Activated naive CD4-positive, alpha-beta T cell treated with anti-CD3 and anti-CD28 coated beads for 36 hours (primary cell): ENCODE measurements at regions of chr7 and their contacts with region 1.

Region 1: GRCh38 chr7:52325237-52325636 is 710.2 kb upstream of the POM121L12 start:
- DNase-seq: no peak
- H3K4me3 Mint-ChIP-seq: no peak overlapping the region
- H3K27ac Mint-ChIP-seq: no peak overlapping the region
- H3K4me1 Mint-ChIP-seq: peaks cover 3% of the 10 kb centered on the region
- H3K27me3 Mint-ChIP-seq: no peaks in the 10 kb centered on the region

Region 2: DNA sequence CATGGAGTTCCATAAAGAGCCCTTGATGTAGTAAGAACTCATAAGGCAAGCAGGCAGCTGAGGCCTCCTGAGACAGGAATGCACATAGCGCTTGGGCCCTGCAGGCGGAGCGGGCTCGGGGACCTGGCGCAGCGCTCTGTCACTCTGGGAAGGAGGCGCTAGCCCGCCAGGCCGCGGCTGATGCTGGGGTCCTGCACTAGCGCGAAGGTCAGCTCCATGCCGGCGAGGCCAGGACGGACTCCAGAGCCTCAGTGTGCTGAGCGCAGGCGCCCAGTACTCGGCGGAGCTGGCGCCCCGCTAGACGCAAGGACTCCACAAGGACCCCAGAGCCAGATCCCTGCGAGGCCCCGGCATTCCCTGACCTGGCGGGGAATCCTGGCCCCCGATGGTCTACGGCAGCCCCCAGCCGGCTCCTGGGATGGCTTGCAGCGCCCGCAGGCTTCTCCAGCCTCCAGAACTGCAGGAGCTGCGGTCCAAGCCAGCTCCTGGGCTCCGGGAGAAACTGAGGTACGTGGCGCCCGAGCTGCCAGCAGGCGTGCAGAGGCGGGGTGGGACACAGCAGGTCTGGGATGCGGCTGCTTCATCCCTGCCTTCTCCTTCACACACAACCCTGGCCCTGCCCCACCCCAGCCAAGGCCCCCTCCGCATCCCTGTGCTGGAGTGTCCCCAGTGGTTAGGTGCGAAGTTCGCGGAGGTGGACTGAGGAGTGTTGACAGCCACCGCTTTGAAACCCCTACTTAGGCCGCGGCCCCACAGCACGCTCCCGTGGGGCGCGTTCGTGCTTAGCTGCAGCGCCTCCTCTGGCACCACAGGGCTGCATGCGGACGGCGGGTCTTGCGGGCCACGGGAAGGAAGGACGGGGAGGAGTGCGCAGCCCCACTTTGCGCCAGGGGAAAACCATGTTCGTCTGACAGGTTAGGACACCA is 51.3 kb before region 1 on chr7:
- CTCF ChIA-PET with region 1: no interaction called
- intact Hi-C with region 1: loop called (anchors 2 kb)
- DNase-seq: peak; percentile 27
- H3K4me3 Mint-ChIP-seq: peak overlapping the region; percentile 68
- H3K27ac Mint-ChIP-seq: peak overlapping the region; percentile 79
- H3K4me1 Mint-ChIP-seq: no peaks in the 10 kb centered on the region
- H3K27me3 Mint-ChIP-seq: no peaks in the 10 kb centered on the region